ENCODE measurements at regions of chr7 and their contacts with region 1.

Region 1: DNA sequence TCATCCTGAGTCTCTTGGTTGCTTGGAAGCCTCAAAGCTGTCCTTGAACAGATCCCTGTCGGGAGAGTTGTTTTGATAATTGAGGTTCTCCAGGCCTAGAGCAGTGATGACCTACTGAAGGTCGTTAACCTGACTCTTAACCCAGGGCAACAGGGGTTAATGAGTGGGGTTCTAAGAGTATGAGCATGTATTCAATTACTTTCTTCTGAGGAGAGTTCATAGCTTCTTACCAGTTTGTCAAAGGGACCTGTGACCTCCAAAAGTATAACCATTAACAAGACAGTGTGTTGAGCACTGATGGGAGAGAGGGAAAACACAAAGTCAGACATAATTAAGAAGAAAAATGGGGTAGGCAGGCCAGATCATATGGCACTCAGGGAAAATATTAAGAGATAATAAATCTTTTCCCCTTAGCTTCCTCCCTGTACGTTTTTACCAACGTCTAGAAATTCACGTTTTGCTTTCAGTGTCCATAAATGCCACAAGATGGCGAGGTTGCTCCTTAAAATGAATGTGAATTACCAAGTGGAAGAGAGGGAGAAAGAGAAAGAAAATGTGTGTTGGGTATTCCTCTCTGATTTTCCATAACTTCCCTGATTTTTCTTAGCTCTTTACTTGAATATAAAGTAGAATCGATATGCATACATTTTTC is 97.6 kb downstream of the SUGCT start:
- DNase-seq: peak; percentile 57
- H3K4me3 ChIP-seq: no peak overlapping the region
- H3K27ac ChIP-seq: peak overlapping the region; percentile 59 to 85
- H3K4me1 ChIP-seq: peaks cover 0 to 4% of the 10 kb centered on the region in 2 experiments; a peak in 1 of 4 replicates
- H3K27me3 ChIP-seq: no peaks in the 10 kb centered on the region
- CTCF ChIP-seq: peak; percentile 97
- EP300 ChIP-seq: no peak; a peak in 1 of 4 replicates
- RAD21 ChIP-seq: peak; percentile 97

Region 2: DNA sequence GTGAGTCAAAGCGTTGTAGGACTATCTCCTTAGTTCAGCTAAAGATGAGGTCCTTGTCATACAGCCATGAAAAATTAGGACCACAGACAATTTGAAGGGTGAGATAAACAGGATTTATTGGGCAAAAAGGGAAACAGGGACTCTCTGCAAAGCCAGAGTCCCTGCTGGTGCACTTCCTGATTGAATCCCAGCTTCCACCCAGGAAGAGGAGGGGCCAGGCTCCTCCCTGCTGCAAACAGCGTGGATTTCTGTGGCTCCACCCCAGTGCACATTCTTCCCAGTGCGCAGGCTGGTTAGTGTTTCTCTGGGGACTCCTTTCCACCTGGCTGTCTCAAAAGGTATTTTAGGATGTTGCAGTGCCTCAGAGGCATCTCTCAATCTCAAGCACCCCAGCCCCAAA is 831.5 kb before region 1 on chr7:
- CTCF ChIA-PET with region 1: no interaction called
- POLR2A ChIA-PET with region 1: no interaction called
- DNase-seq: no peak
- H3K4me3 ChIP-seq: no peak overlapping the region
- H3K27ac ChIP-seq: no peak overlapping the region
- H3K4me1 ChIP-seq: no peaks in the 10 kb centered on the region
- H3K27me3 ChIP-seq: peaks cover 16% of the 10 kb centered on the region; the same call in 1 of the 2 replicates
- CTCF ChIP-seq: no peak
- EP300 ChIP-seq: no peak
- RAD21 ChIP-seq: no peak

Region 3: GRCh38 chr7:40199076-40199802 is 33.1 kb before region 1 on chr7:
- CTCF ChIA-PET with region 1: interaction called, 11 read pairs
- POLR2A ChIA-PET with region 1: no interaction called
- DNase-seq: peak; percentile 47
- H3K4me3 ChIP-seq: no peak overlapping the region
- H3K27ac ChIP-seq: peak overlapping the region; percentile 77 to 92; a peak in 3 of 4 replicates
- H3K4me1 ChIP-seq: peaks cover 0 to 22% of the 10 kb centered on the region in 2 experiments; a peak in 2 of 4 replicates
- H3K27me3 ChIP-seq: no peaks in the 10 kb centered on the region
- CTCF ChIP-seq: peak; percentile 90
- EP300 ChIP-seq: no peak; a peak in 1 of 4 replicates
- RAD21 ChIP-seq: peak; percentile 75

Region 4: DNA sequence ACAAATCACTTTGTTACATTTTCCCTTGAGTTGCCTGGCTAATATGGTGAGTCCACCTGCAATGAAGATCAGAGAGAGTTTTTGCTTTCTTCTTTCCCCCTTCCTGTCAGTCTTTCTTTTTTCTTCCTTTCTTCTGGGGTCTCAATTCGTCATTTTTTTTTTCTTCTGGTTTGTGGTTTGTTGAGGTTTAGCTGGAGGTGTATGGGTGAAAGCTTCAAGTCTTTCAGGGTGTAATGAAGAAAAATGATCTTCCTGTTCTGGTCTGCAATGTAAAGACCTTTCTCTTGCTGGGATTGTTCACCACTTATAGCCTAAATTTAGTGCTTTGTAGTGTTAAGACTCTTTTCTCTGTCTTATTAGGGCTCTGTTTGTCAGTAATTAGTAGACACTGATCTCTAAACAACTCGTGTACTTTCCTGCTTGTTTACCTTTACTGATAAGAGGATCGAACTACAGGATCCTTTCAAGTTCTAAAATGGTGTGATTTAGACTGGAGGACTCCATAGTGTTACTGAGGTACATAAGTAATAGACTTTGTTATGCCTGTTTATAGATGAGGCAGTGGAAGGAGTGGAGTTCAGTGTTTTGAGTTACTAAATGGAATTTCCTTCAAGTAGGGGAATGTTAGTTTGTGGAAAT is 31.5 kb after region 1 on chr7:
- CTCF ChIA-PET with region 1: interaction called, 10 read pairs
- POLR2A ChIA-PET with region 1: no interaction called
- DNase-seq: no peak
- H3K4me3 ChIP-seq: no peak overlapping the region
- H3K27ac ChIP-seq: no peak overlapping the region
- H3K4me1 ChIP-seq: no peaks in the 10 kb centered on the region
- H3K27me3 ChIP-seq: no peaks in the 10 kb centered on the region
- CTCF ChIP-seq: no peak
- EP300 ChIP-seq: no peak
- RAD21 ChIP-seq: no peak

Region 5: DNA sequence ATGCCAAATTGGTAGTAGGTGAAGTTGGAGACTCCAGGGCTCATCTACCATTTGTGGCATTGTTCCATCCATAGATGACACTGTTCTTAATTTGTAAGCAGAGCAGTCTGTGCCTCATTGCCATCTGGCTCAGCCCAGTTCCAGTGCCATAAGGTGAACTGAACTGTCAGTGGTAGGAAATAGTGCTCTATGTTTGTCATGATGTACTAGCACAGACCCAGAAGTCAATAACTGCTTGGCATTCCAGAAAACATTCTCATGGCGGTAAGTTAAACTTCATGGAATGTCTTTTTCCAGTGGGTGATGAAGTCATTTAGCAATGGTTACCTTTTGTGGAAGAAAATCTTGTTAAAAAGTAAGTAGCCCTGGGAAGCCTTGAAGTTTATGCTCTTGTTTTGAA is 205.1 kb after region 1 on chr7:
- CTCF ChIA-PET with region 1: no interaction called
- POLR2A ChIA-PET with region 1: no interaction called
- DNase-seq: no peak
- H3K4me3 ChIP-seq: no peak overlapping the region
- H3K27ac ChIP-seq: peak overlapping the region; percentile 90 to 94
- H3K4me1 ChIP-seq: peaks cover 0 to 18% of the 10 kb centered on the region in 2 experiments
- H3K27me3 ChIP-seq: no peaks in the 10 kb centered on the region
- CTCF ChIP-seq: no peak
- EP300 ChIP-seq: peak; percentile 71 to 99
- RAD21 ChIP-seq: no peak

Region 6: DNA sequence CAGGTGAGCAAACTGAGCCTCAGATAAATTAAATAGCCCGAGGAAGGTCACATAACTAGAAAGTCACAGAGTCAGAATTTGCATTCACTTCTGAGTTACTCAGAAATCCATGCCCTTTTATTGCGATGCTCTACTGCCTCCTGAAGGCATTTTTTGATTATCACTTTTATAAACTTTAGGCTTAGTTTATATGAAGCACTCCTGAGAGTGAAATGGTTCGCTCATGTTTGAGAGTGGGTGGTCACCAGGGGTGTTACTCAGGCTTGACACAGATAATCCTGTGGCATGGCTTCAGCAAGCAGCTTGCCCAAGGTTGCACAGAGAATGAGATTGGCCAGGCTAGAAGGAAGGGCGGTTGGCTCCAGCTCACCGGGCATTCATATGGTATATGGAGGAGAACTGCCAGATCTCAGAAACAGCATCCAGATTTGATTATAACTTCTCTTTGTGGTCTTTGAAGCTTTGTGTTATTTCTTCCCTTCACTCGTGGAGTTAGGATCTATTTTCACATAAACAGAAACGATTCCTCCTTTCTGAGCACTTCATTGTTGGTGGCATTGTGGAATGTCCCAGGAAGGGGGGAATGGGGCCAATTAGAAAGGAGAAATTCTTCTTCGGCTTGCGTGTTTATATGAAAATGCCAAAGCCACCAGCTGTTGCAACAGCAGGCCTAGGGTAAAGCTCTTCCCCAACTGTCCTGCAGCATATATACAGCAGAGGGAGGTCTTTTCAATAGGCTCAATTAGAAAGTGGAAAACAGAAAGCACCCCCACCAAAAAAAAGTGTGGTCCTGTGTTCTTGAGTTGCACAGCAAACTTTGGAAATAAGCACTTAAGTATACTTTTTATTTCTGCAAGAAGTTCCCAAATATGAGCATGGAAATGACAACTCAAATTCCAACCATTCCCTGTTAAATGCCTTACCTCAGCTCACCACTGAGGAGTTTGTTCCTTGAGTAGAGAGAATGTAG is 531.2 kb after region 1 on chr7:
- CTCF ChIA-PET with region 1: interaction called, 13 read pairs
- POLR2A ChIA-PET with region 1: no interaction called
- DNase-seq: peak; percentile 8
- H3K4me3 ChIP-seq: no peak overlapping the region
- H3K27ac ChIP-seq: peak overlapping the region; percentile 39 to 86
- H3K4me1 ChIP-seq: peaks cover 11 to 14% of the 10 kb centered on the region in 2 experiments; a peak in 3 of 4 replicates
- H3K27me3 ChIP-seq: no peaks in the 10 kb centered on the region
- CTCF ChIP-seq: peak; percentile 44
- EP300 ChIP-seq: no peak; a peak in 2 of 4 replicates
- RAD21 ChIP-seq: peak; percentile 75

Region 7: GRCh38 chr7:41711283-41712064 is 1479.1 kb after region 1 on chr7:
- CTCF ChIA-PET with region 1: interaction called, 86 read pairs
- POLR2A ChIA-PET with region 1: no interaction called
- DNase-seq: peak; percentile 41
- H3K4me3 ChIP-seq: no peak overlapping the region
- H3K27ac ChIP-seq: no peak overlapping the region
- H3K4me1 ChIP-seq: peaks cover under 1 to 4% of the 10 kb centered on the region in 2 experiments; a peak in 2 of 4 replicates
- H3K27me3 ChIP-seq: no peaks in the 10 kb centered on the region
- CTCF ChIP-seq: peak; percentile 54
- EP300 ChIP-seq: no peak
- RAD21 ChIP-seq: peak; percentile 53

Region 8: GRCh38 chr7:41940760-41941343 is 1708.5 kb after region 1 on chr7:
- CTCF ChIA-PET with region 1: interaction called, 12 read pairs
- POLR2A ChIA-PET with region 1: no interaction called
- DNase-seq: peak; percentile 73
- H3K4me3 ChIP-seq: no peak overlapping the region
- H3K27ac ChIP-seq: no peak overlapping the region
- H3K4me1 ChIP-seq: peaks cover 0 to 3% of the 10 kb centered on the region in 2 experiments; a peak in 1 of 4 replicates
- H3K27me3 ChIP-seq: no peaks in the 10 kb centered on the region
- CTCF ChIP-seq: peak; percentile 99
- EP300 ChIP-seq: no peak
- RAD21 ChIP-seq: peak; percentile 82